IMR-90 (cell line): ENCODE measurements at regions of chr5 and their contacts with region 1.

Region 1: DNA sequence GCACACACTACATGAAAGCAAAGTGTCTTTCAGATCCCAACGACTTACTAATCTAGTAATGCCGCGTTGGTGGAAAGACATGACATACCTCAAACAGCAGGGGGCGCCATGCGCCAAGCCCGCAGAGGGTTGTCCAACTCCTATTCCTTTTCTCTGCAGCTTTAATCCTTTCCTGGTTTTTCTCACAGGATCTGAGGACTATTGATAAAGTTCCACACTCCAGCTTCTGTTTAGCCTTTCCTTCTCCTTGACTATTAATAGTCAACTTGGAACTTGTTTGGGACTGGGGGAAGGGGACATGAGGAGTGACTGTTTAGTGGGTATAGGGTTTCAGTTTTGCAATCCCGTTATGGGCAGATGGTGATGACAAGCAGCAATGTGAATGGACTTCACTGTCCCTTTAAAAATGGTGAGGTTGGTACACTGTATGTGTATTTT is 62.9 kb downstream of the OTULIN start:
- DNase-seq: peak; percentile 81
- ATAC-seq: peak; percentile 84
- H3K4me3 ChIP-seq: no peak overlapping the region
- H3K27ac ChIP-seq: no peak overlapping the region
- H3K4me1 ChIP-seq: peaks cover 10% of the 10 kb centered on the region
- H3K27me3 ChIP-seq: no peaks in the 10 kb centered on the region
- CTCF ChIP-seq: peak; percentile 98
- POLR2A ChIP-seq: peak; percentile 52; the same call in 1 of the 2 replicates
- RAD21 ChIP-seq: peak; percentile 99

Region 2: GRCh38 chr5:14685757-14686156 is 41.7 kb before region 1 on chr5:
- CTCF ChIA-PET with region 1: interaction called, 7 read pairs
- POLR2A ChIA-PET with region 1: no interaction called
- dilution Hi-C with region 1: no loop called
- in situ Hi-C with region 1: no loop called
- intact Hi-C with region 1: loop called (anchors 1 kb)
- DNase-seq: peak; percentile 69
- ATAC-seq: peak; percentile 89
- H3K4me3 ChIP-seq: no peak overlapping the region
- H3K27ac ChIP-seq: no peak overlapping the region
- H3K4me1 ChIP-seq: peaks cover 3% of the 10 kb centered on the region
- H3K27me3 ChIP-seq: no peaks in the 10 kb centered on the region
- CTCF ChIP-seq: peak; percentile 76
- POLR2A ChIP-seq: no peak
- RAD21 ChIP-seq: peak; percentile 86

Region 3: GRCh38 chr5:14871210-14872069 is 144.0 kb after region 1 on chr5 and contains the start of gene ANKH:
- CTCF ChIA-PET with region 1: interaction called, 3 read pairs
- POLR2A ChIA-PET with region 1: no interaction called
- dilution Hi-C with region 1: no loop called
- in situ Hi-C with region 1: no loop called
- intact Hi-C with region 1: loop called (anchors 1 kb)
- DNase-seq: peak; percentile 69
- ATAC-seq: peak; percentile 97
- H3K4me3 ChIP-seq: peak within 1 kb of the TSS; percentile 65
- H3K27ac ChIP-seq: peak within 1 kb of the TSS; percentile 89
- H3K4me1 ChIP-seq: peaks cover 2% of the 10 kb centered on the region
- H3K27me3 ChIP-seq: no peaks in the 10 kb centered on the region
- CTCF ChIP-seq: peak; percentile 58
- POLR2A ChIP-seq: peak; percentile 20
- RAD21 ChIP-seq: peak; percentile 38
- total RNA-seq, gene ANKH: 5.2 and 5.6 TPM in 2 replicates

Region 4: GRCh38 chr5:14900731-14901461 is 173.4 kb after region 1 on chr5:
- CTCF ChIA-PET with region 1: no interaction called
- POLR2A ChIA-PET with region 1: no interaction called
- dilution Hi-C with region 1: no loop called
- in situ Hi-C with region 1: no loop called
- intact Hi-C with region 1: loop called (anchors 1 kb)
- DNase-seq: peak; percentile 86
- ATAC-seq: peak; percentile 78
- H3K4me3 ChIP-seq: no peak overlapping the region
- H3K27ac ChIP-seq: peak overlapping the region; percentile 90
- H3K4me1 ChIP-seq: peaks cover 7% of the 10 kb centered on the region
- H3K27me3 ChIP-seq: peaks cover 2% of the 10 kb centered on the region
- CTCF ChIP-seq: no peak
- POLR2A ChIP-seq: no peak
- RAD21 ChIP-seq: no peak

Region 5: DNA sequence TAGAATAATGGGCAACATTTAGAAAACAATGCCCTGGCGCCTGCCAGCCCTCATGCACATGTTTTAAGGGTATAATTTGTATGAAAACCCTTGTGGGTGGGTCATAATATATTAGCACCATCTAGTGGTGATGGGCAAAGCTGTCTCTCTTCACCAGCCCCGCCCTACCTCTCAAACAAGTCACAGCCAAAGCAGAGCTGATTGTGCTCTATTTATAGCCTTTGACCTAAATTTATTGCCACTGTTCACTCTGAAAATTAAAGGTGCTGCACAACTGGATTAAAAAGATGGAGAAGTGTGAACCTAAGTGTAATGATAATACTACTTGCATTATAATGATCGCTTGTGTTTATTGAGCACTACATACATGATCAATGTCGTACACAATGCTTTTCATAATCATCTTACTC is 276.1 kb after region 1 on chr5:
- CTCF ChIA-PET with region 1: interaction called, 30 read pairs
- POLR2A ChIA-PET with region 1: no interaction called
- dilution Hi-C with region 1: no loop called
- in situ Hi-C with region 1: loop called (anchors 5 kb)
- intact Hi-C with region 1: loop called (anchors 1 kb)
- DNase-seq: peak; percentile 75
- ATAC-seq: peak; percentile 88
- H3K4me3 ChIP-seq: no peak overlapping the region
- H3K27ac ChIP-seq: no peak overlapping the region
- H3K4me1 ChIP-seq: peaks cover 3% of the 10 kb centered on the region; the same call in 1 of the 2 replicates
- H3K27me3 ChIP-seq: peaks cover 9% of the 10 kb centered on the region; the same call in 1 of the 2 replicates
- CTCF ChIP-seq: peak; percentile 91
- POLR2A ChIP-seq: no peak
- RAD21 ChIP-seq: peak; percentile 92

Region 6: DNA sequence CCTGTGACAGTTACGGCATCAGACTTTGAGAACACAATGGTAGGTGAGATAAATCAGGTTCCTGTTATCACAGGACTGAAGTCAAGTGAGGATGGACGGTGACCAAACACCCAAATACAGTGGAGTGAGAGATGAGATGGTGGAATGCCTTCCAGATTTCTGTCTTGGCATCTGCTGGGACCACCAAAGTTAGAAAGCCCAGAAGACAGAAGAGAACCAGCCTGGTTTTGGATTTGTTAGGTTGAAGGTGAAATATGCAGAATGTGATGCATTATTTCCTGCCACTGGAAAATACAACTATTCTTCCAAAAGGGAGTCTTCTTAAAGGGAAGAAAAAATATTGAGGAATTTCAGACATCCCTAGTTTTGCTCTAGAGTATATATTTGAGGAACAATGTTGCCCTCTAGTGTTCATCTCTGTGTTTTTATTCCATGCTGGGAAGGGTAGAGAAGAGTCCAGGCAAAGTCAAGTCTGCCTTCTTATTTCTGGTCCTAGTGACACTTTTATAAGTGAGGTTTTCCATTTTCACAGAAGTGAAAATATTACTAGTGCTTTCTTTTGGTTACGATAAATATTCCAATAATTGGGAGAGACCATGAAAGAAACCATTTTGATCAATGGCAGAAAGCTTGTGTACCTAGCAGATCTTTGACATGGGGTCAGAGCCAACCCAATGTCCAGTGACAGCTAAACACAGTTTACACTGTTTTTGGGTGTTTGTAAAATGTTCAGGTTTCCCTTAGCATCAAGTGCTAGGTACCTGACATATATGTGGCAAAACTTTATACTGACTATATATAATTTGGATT is 286.4 kb after region 1 on chr5:
- CTCF ChIA-PET with region 1: interaction called, 13 read pairs
- POLR2A ChIA-PET with region 1: no interaction called
- dilution Hi-C with region 1: no loop called
- in situ Hi-C with region 1: no loop called
- intact Hi-C with region 1: loop called (anchors 1 kb)
- DNase-seq: peak; percentile 80
- ATAC-seq: peak; percentile 75
- H3K4me3 ChIP-seq: no peak overlapping the region
- H3K27ac ChIP-seq: no peak overlapping the region
- H3K4me1 ChIP-seq: peaks cover 12% of the 10 kb centered on the region
- H3K27me3 ChIP-seq: no peaks in the 10 kb centered on the region
- CTCF ChIP-seq: peak; percentile 76
- POLR2A ChIP-seq: no peak
- RAD21 ChIP-seq: peak; percentile 79

Region 7: GRCh38 chr5:15183522-15183921 is 456.1 kb after region 1 on chr5:
- CTCF ChIA-PET with region 1: no interaction called
- POLR2A ChIA-PET with region 1: no interaction called
- dilution Hi-C with region 1: no loop called
- in situ Hi-C with region 1: no loop called
- intact Hi-C with region 1: loop called (anchors 5 kb)
- DNase-seq: peak; percentile 6
- ATAC-seq: no peak
- H3K4me3 ChIP-seq: no peak overlapping the region
- H3K27ac ChIP-seq: no peak overlapping the region
- H3K4me1 ChIP-seq: no peaks in the 10 kb centered on the region
- H3K27me3 ChIP-seq: no peaks in the 10 kb centered on the region; the same call in 1 of the 2 replicates
- CTCF ChIP-seq: peak; percentile 24; the same call in 1 of the 2 replicates
- POLR2A ChIP-seq: no peak
- RAD21 ChIP-seq: peak; percentile 20; the same call in 1 of the 2 replicates

Region 8: DNA sequence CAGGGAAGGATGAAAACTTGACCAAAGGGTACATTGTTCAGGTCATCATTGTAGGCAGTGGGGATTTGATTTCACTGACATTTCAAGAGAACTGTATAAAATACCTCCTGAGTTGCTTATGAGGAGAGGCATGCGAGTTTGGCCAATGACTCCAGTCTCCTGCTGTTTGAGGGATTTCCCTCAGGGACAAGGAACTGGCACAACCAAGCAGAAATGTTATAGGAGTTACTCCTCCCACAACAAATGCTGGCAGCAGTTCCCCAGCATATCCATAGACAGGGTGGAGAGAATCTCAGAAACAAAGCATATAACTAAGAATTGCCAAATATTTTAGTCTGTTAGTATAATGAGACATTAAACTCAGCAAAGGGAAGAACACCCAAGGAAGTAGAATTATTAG is 725.3 kb after region 1 on chr5:
- CTCF ChIA-PET with region 1: no interaction called
- POLR2A ChIA-PET with region 1: no interaction called
- dilution Hi-C with region 1: no loop called
- in situ Hi-C with region 1: no loop called
- intact Hi-C with region 1: no loop called
- DNase-seq: no peak
- ATAC-seq: no peak
- H3K4me3 ChIP-seq: no peak overlapping the region
- H3K27ac ChIP-seq: no peak overlapping the region
- H3K4me1 ChIP-seq: no peaks in the 10 kb centered on the region
- H3K27me3 ChIP-seq: no peaks in the 10 kb centered on the region; the same call in 1 of the 2 replicates
- CTCF ChIP-seq: no peak
- POLR2A ChIP-seq: no peak
- RAD21 ChIP-seq: no peak